ENCODE measurements at regions of chr11 and their contacts with region 1.

Region 1: GRCh38 chr11:75532200-75533048 is 6.7 kb upstream of the GDPD5 start:
- DNase-seq: peak; percentile 78 to 88
- H3K4me3 ChIP-seq: no peak overlapping the region
- H3K27ac ChIP-seq: no peak overlapping the region
- H3K4me1 ChIP-seq: peaks cover 0 to 15% (median 2%) of the 10 kb centered on the region in 4 donors
- H3K27me3 ChIP-seq: no peaks in the 10 kb centered on the region
- CTCF ChIP-seq: peak in 5 of 7 experiments; percentile 66 to 94 (median 89)
- EP300 ChIP-seq: no peak
- POLR2A ChIP-seq: no peak

Region 2: GRCh38 chr11:75280227-75280701 is 252.2 kb before region 1 on chr11:
- intact Hi-C with region 1: loop called (anchors 10 kb)
- DNase-seq: peak; percentile 83 to 93
- H3K4me3 ChIP-seq: no peak overlapping the region
- H3K27ac ChIP-seq: peak overlapping the region in 4 of 5 donors; percentile 16 to 56 (median 54)
- H3K4me1 ChIP-seq: peaks cover 5 to 36% (median 15%) of the 10 kb centered on the region in 4 donors
- H3K27me3 ChIP-seq: no peaks in the 10 kb centered on the region
- CTCF ChIP-seq: peak in 6 of 7 experiments; percentile 96 to 99 (median 97)
- EP300 ChIP-seq: no peak
- POLR2A ChIP-seq: no peak

Region 3: GRCh38 chr11:75388386-75389275 is 143.8 kb before region 1 on chr11:
- intact Hi-C with region 1: loop called (anchors 5 kb)
- DNase-seq: peak; percentile 68 to 93
- H3K4me3 ChIP-seq: peak overlapping the region in 1 of 4 donors; percentile 24
- H3K27ac ChIP-seq: peak overlapping the region in 3 of 5 donors; percentile 9 to 62 (median 50)
- H3K4me1 ChIP-seq: peaks cover 5 to 27% (median 22%) of the 10 kb centered on the region in 4 donors
- H3K27me3 ChIP-seq: no peaks in the 10 kb centered on the region
- CTCF ChIP-seq: peak in 5 of 7 experiments; percentile 64 to 92 (median 86)
- EP300 ChIP-seq: no peak
- POLR2A ChIP-seq: no peak

Region 4: DNA sequence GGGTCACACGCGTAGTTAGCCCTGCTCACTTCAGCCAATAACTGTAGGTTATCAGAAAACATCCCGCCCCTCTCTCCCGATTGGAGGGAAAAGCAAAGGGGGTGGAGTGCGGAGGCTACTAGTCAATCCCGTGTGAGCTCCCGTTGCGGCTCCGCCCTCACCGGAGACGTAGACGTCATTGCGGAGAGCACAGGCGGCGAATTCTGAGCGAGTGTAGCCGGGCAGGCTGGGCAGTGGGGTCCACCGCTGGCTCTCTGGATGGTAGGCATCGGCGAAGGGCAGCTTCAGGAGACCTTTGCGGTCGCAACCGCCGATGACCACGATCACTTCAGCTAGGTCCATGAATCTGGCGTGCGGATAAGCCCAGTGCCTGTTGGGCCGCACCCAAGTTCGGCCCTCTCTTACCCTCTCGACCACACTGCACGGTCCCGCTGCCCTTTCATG is 104.1 kb before region 1 on chr11:
- intact Hi-C with region 1: no loop called
- DNase-seq: peak; percentile 91 to 96
- H3K4me3 ChIP-seq: peak overlapping the region; percentile 30 to 40 (median 34)
- H3K27ac ChIP-seq: peak overlapping the region; percentile 64 to 79 (median 77)
- H3K4me1 ChIP-seq: peaks cover 17 to 43% (median 28%) of the 10 kb centered on the region in 4 donors
- H3K27me3 ChIP-seq: peaks cover 0 to 50% (median 12%) of the 10 kb centered on the region in 3 donors
- CTCF ChIP-seq: no peak
- EP300 ChIP-seq: no peak
- POLR2A ChIP-seq: peak in 2 of 4 donors; percentile 48 to 62

Region 5: GRCh38 chr11:75447415-75447814 is 85.0 kb before region 1 on chr11:
- intact Hi-C with region 1: loop called (anchors 2 kb)
- DNase-seq: no peak
- H3K4me3 ChIP-seq: no peak overlapping the region
- H3K27ac ChIP-seq: no peak overlapping the region
- H3K4me1 ChIP-seq: peaks cover 0 to 6% (median 2%) of the 10 kb centered on the region in 4 donors
- H3K27me3 ChIP-seq: peaks cover 0 to 18% (median 0%) of the 10 kb centered on the region in 3 donors
- CTCF ChIP-seq: no peak
- EP300 ChIP-seq: no peak
- POLR2A ChIP-seq: no peak